ENCODE measurements at regions of chr7 and their contacts with region 1.

Region 1: DNA sequence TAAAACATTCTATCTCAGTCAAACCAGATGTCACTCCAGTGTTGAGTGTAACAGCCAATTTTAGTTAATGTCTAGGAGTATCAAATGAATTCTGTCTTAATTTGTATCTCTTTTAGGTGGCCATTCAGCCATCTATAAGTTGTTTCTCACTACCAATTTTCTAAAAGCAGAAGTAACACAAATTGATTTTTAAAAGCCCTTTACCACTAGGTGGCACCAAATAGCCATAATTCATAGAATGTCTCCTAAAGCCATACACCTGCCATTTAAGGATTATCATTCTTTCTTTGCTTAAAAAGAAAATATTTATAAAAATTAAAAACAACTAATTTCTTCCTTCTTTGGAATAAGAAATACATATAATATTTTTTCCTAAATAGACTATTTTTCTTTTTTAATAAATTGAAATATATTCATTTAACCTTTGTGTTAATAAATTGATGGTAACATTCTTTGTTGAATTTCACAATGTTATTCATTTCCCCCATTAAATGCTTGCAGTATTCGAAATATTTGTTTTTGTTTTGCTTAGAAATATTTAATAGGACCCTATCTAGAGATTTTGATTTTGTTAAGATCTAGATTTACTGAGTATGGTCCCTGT is 107.8 kb upstream of the PPP1R3A start:
- DNase-seq: no peak
- ATAC-seq: peak; percentile 82
- H3K4me3 ChIP-seq: no peak overlapping the region
- H3K27ac ChIP-seq: no peak overlapping the region
- H3K4me1 ChIP-seq: no peaks in the 10 kb centered on the region
- H3K27me3 ChIP-seq: no peaks in the 10 kb centered on the region; a peak in 1 of 4 replicates
- CTCF ChIP-seq: peak; percentile 31 to 74 (median 32); a peak in 4 of 6 replicates
- EP300 ChIP-seq: no peak
- POLR2A ChIP-seq: no peak
- RAD21 ChIP-seq: peak; percentile 81

Region 2: GRCh38 chr7:113710310-113711106 is 316.1 kb before region 1 on chr7:
- CTCF ChIA-PET with region 1: no interaction called
- POLR2A ChIA-PET with region 1: no interaction called
- RAD21 ChIA-PET with region 1: no interaction called
- SMC1A ChIA-PET with region 1: no interaction called
- in situ Hi-C with region 1: no loop called
- intact Hi-C with region 1: no loop called
- DNase-seq: peak; percentile 44
- ATAC-seq: peak; percentile 95
- H3K4me3 ChIP-seq: no peak overlapping the region
- H3K27ac ChIP-seq: no peak overlapping the region
- H3K4me1 ChIP-seq: no peaks in the 10 kb centered on the region
- H3K27me3 ChIP-seq: no peaks in the 10 kb centered on the region
- CTCF ChIP-seq: peak; percentile 78 to 97 (median 91)
- EP300 ChIP-seq: no peak
- POLR2A ChIP-seq: no peak
- RAD21 ChIP-seq: peak; percentile 62

Region 3: GRCh38 chr7:113774182-113774807 is 252.3 kb before region 1 on chr7:
- CTCF ChIA-PET with region 1: no interaction called
- POLR2A ChIA-PET with region 1: no interaction called
- RAD21 ChIA-PET with region 1: no interaction called
- SMC1A ChIA-PET with region 1: no interaction called
- in situ Hi-C with region 1: no loop called
- intact Hi-C with region 1: loop called (anchors 10 kb)
- DNase-seq: no peak
- ATAC-seq: peak; percentile 84
- H3K4me3 ChIP-seq: no peak overlapping the region
- H3K27ac ChIP-seq: no peak overlapping the region
- H3K4me1 ChIP-seq: no peaks in the 10 kb centered on the region
- H3K27me3 ChIP-seq: no peaks in the 10 kb centered on the region
- CTCF ChIP-seq: peak; percentile 63 to 66 (median 63)
- EP300 ChIP-seq: no peak
- POLR2A ChIP-seq: no peak
- RAD21 ChIP-seq: peak; percentile 51

Region 4: DNA sequence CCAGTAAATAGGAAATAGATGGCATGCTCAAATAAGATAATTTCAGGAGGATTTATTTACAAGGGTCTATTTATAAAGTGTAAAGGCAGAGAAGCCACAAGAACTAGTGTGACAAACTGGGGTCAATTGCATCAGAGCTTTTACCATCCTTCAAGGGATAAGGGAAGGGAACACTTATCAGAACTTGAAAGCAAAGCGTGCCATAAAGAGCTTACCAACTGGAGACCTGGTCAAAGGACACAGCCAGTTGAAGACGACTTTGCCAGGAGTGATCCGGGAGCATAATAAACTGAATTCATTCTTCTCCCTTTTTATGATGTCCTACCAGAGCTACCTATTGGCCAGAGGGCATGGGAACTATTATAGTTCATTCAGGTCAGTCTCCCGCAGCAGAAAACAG is 104.5 kb before region 1 on chr7:
- CTCF ChIA-PET with region 1: no interaction called
- POLR2A ChIA-PET with region 1: no interaction called
- RAD21 ChIA-PET with region 1: no interaction called
- SMC1A ChIA-PET with region 1: no interaction called
- in situ Hi-C with region 1: no loop called
- intact Hi-C with region 1: no loop called
- DNase-seq: no peak
- ATAC-seq: no peak
- H3K4me3 ChIP-seq: no peak overlapping the region
- H3K27ac ChIP-seq: no peak overlapping the region
- H3K4me1 ChIP-seq: no peaks in the 10 kb centered on the region
- H3K27me3 ChIP-seq: no peaks in the 10 kb centered on the region; a peak in 1 of 4 replicates
- CTCF ChIP-seq: no peak
- EP300 ChIP-seq: no peak
- POLR2A ChIP-seq: no peak
- RAD21 ChIP-seq: no peak

Region 5: GRCh38 chr7:114217026-114217425 is 190.4 kb after region 1 on chr7:
- CTCF ChIA-PET with region 1: no interaction called
- POLR2A ChIA-PET with region 1: no interaction called
- RAD21 ChIA-PET with region 1: no interaction called
- SMC1A ChIA-PET with region 1: no interaction called
- in situ Hi-C with region 1: no loop called
- intact Hi-C with region 1: loop called (anchors 5 kb)
- DNase-seq: no peak
- ATAC-seq: peak; percentile 48; the same call in 2 of the 3 replicates
- H3K4me3 ChIP-seq: no peak overlapping the region
- H3K27ac ChIP-seq: no peak overlapping the region
- H3K4me1 ChIP-seq: no peaks in the 10 kb centered on the region
- H3K27me3 ChIP-seq: no peaks in the 10 kb centered on the region
- CTCF ChIP-seq: peak in 1 of 3 experiments; percentile 9; a peak in 1 of 6 replicates
- EP300 ChIP-seq: no peak
- POLR2A ChIP-seq: no peak
- RAD21 ChIP-seq: no peak

Region 6: DNA sequence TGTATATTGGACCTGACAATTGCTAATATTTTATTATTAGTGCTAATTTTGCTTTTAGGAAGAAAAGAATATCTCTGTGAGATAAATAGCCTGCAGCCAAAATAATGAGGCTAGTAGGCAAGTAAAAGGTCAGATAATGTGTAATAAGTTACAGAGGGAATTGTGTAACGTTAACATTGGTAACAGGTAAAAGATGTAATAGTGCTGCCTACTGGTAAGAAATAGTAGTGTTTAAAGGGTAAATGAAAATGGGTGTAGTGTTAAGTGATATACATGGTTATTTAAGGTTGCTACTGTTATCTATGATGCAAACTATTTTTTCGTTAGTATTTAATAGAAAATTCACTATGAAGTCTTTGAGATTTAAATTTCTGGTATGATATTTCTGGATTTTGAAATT is 378.8 kb after region 1 on chr7:
- CTCF ChIA-PET with region 1: no interaction called
- POLR2A ChIA-PET with region 1: no interaction called
- RAD21 ChIA-PET with region 1: no interaction called
- SMC1A ChIA-PET with region 1: no interaction called
- in situ Hi-C with region 1: no loop called
- intact Hi-C with region 1: loop called (anchors 5 kb)
- DNase-seq: no peak
- ATAC-seq: peak; percentile 92
- H3K4me3 ChIP-seq: no peak overlapping the region
- H3K27ac ChIP-seq: no peak overlapping the region
- H3K4me1 ChIP-seq: no peaks in the 10 kb centered on the region
- H3K27me3 ChIP-seq: peaks cover 0 to 2% of the 10 kb centered on the region in 2 experiments; a peak in 1 of 4 replicates
- CTCF ChIP-seq: peak in 2 of 3 experiments; percentile 17 to 25; a peak in 3 of 6 replicates
- EP300 ChIP-seq: no peak
- POLR2A ChIP-seq: no peak
- RAD21 ChIP-seq: no peak

Region 7: DNA sequence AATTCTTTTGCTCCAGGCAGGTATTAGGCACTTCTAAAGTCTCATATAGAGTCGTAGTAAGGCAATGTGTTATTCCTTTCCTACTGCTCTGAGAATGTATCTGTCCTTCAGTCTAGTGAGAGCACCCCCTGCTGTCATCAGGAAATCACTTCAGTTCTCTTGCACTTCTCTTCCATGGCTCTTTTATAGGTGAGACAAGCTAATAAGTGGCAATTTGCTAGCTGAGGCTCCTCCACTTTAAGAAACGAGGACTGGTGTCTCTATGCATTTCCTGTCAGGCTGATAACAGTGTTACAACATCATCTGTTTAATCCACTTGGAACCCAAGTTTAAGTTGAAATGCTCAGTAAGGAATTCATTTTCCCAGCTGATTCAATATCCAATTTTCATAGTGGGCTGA is 1653.4 kb after region 1 on chr7:
- CTCF ChIA-PET with region 1: interaction called, 3 read pairs
- POLR2A ChIA-PET with region 1: no interaction called
- RAD21 ChIA-PET with region 1: no interaction called
- SMC1A ChIA-PET with region 1: no interaction called
- in situ Hi-C with region 1: no loop called
- intact Hi-C with region 1: loop called (anchors 10 kb)
- DNase-seq: peak; percentile 5
- ATAC-seq: peak; percentile 89
- H3K4me3 ChIP-seq: no peak overlapping the region
- H3K27ac ChIP-seq: no peak overlapping the region
- H3K4me1 ChIP-seq: no peaks in the 10 kb centered on the region
- H3K27me3 ChIP-seq: no peaks in the 10 kb centered on the region
- CTCF ChIP-seq: peak; percentile 37 to 49 (median 44); a peak in 3 of 6 replicates
- EP300 ChIP-seq: no peak
- POLR2A ChIP-seq: no peak
- RAD21 ChIP-seq: peak; percentile 47

Region 8: DNA sequence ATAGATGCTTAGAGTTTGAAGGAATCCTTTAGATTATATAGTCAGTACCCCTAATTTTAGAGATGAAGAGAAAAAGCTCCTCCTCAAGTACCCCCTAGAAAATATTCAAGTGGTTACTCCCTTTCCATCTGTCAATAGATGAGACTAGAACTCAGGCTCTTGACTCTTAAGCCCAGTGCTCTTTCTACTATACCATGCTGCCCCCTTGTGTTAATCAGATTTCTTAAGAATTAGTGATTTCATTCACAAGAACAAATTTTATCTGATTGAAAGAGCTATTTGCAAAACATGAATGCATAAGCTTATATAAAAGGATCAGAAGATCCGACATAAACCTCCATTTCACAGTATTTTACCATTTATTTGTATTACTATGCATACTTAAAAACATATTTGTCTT is 1824.7 kb after region 1 on chr7:
- CTCF ChIA-PET with region 1: interaction called, 4 read pairs
- POLR2A ChIA-PET with region 1: no interaction called
- RAD21 ChIA-PET with region 1: interaction called, 3 read pairs
- SMC1A ChIA-PET with region 1: interaction called, 3 read pairs
- in situ Hi-C with region 1: no loop called
- intact Hi-C with region 1: loop called (anchors 5 kb)
- DNase-seq: no peak
- ATAC-seq: peak; percentile 57
- H3K4me3 ChIP-seq: no peak overlapping the region
- H3K27ac ChIP-seq: no peak overlapping the region
- H3K4me1 ChIP-seq: no peaks in the 10 kb centered on the region
- H3K27me3 ChIP-seq: no peaks in the 10 kb centered on the region; a peak in 1 of 4 replicates
- CTCF ChIP-seq: peak; percentile 13 to 55 (median 20); a peak in 4 of 6 replicates
- EP300 ChIP-seq: no peak
- POLR2A ChIP-seq: no peak
- RAD21 ChIP-seq: peak; percentile 73